ENCODE measurements at regions of chr9 and their contacts with region 1.

Region 1: GRCh38 chr9:95249986-95250385 is 67.5 kb downstream of the FANCC start:
- DNase-seq: no peak
- ATAC-seq: no peak
- H3K4me3 ChIP-seq: no peak overlapping the region
- H3K27ac ChIP-seq: no peak overlapping the region
- H3K4me1 ChIP-seq: peaks cover 0 to 15% (median 8%) of the 10 kb centered on the region in 9 donors
- H3K27me3 ChIP-seq: no peaks in the 10 kb centered on the region
- CTCF ChIP-seq: no peak

Region 2: DNA sequence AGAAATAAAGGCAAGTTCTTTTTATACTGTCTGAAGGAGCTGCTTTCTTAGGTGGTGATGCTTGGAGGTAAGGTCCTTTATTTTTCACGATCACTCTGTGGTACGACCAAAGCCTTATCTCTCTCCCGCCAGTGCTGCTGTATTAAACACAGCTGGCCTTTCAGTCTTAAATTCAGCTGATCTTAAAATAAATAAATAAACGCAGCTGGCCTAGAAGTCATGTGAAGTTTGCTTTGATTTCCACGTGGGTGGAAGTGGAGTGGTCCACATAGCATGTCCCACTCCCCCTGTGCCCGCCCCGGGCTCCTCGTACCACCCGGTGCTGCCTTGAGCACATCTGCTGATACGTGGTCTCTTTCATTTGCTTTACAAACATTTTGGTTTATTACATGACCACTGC is 192.9 kb before region 1 on chr9:
- intact Hi-C with region 1: no loop called
- DNase-seq: no peak
- ATAC-seq: peak in 4 of 8 donors; percentile 13 to 32 (median 27)
- H3K4me3 ChIP-seq: peak overlapping the region in 7 of 10 donors; percentile 7 to 39 (median 33)
- H3K27ac ChIP-seq: peak overlapping the region in 8 of 10 donors; percentile 31 to 84 (median 68)
- H3K4me1 ChIP-seq: peaks cover 28 to 100% (median 91%) of the 10 kb centered on the region in 9 donors
- H3K27me3 ChIP-seq: no peaks in the 10 kb centered on the region
- CTCF ChIP-seq: no peak

Region 3: DNA sequence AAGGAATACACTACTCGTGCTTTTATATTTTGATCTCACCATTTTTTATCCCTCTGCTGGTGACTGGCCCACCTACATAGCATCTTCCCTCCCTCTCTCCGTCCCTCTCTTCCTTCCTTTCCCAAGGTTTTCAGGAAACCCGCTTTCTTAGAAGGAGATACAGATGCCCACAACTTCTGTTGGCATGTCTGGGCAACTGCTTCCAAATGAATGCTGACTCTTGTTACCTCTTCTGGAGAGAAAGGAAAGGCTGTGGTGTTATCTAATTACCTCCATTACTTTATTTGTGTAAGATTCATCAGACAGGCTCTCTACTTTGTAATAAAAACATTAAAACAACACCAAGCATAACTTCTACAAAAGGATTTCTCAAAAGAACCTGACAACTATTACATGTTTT is 47.3 kb after region 1 on chr9:
- intact Hi-C with region 1: loop called in 1 of 10 experiments (anchors 5 kb)
- DNase-seq: no peak
- ATAC-seq: no peak
- H3K4me3 ChIP-seq: no peak overlapping the region
- H3K27ac ChIP-seq: no peak overlapping the region
- H3K4me1 ChIP-seq: no peaks in the 10 kb centered on the region
- H3K27me3 ChIP-seq: no peaks in the 10 kb centered on the region
- CTCF ChIP-seq: no peak

Measured in heart right ventricle (tissue), 16 donors.